Activated CD8-positive, alpha-beta memory T cell treated with anti-CD3 and anti-CD28 coated beads, Interleukin-2, amount 10 ng/mL, durations not matched to agents 7 days and 5 days (primary cell): ENCODE measurements at regions of chr11 and their contacts with region 1.

Region 1: GRCh38 chr11:63969461-63969860 is 5.0 kb upstream of the COX8A start:
- DNase-seq: no peak
- ATAC-seq: no peak
- H3K4me3 Mint-ChIP-seq: no peak overlapping the region
- H3K27ac Mint-ChIP-seq: no peak overlapping the region
- H3K4me1 Mint-ChIP-seq: peaks cover 9% of the 10 kb centered on the region
- H3K27me3 Mint-ChIP-seq: no peaks in the 10 kb centered on the region

Region 2: DNA sequence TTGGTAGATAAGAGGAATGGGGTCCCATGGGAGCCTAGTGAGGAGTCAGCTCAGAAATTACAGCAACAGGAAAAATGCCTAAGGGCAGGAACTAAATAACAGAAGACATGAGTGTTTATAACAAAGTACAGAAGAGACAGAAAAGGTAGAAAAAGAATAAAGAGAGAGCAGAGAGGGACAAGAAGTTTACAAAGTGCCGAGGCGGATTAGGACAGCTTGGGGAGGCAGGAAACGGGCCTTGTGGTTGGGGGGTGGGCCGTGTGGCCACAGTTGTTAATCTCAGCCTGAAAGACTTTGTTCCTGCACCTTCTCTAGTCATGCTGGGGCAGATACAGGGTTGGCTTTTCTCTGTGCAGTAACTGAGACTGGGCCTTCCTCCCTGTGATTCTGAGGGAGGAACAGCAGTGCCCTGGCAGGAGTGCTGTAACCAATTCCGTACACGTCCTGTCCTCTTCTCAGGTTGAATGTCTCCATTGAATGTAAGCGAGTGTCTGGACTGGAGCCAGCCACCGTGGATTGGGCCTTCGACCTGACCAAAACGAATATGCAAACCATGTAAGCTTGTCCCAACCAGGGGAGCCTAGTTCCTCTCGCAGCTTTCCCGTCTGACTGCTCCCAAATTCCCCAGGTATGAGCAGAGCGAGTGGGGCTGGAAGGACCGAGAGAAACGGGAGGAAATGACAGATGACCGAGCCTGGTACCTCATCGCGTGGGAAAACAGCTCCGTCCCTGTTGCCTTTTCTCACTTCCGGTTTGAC is 17.5 kb before region 1 on chr11:
- CTCF ChIA-PET with region 1: interaction called, 11 read pairs
- DNase-seq: peak; percentile 88
- ATAC-seq: peak; percentile 85
- H3K4me3 Mint-ChIP-seq: peak overlapping the region; percentile 57
- H3K27ac Mint-ChIP-seq: peak overlapping the region; percentile 88
- H3K4me1 Mint-ChIP-seq: peaks cover 34% of the 10 kb centered on the region
- H3K27me3 Mint-ChIP-seq: no peaks in the 10 kb centered on the region

Region 3: GRCh38 chr11:64060861-64061444 is 91.5 kb after region 1 on chr11:
- CTCF ChIA-PET with region 1: no interaction called
- DNase-seq: peak; percentile 72
- ATAC-seq: peak; percentile 89
- H3K4me3 Mint-ChIP-seq: peak overlapping the region; percentile 68
- H3K27ac Mint-ChIP-seq: no peak overlapping the region
- H3K4me1 Mint-ChIP-seq: peaks cover 6% of the 10 kb centered on the region
- H3K27me3 Mint-ChIP-seq: peaks cover 16% of the 10 kb centered on the region